ENCODE measurements at regions of chr16 and their contacts with region 1.

Region 1: DNA sequence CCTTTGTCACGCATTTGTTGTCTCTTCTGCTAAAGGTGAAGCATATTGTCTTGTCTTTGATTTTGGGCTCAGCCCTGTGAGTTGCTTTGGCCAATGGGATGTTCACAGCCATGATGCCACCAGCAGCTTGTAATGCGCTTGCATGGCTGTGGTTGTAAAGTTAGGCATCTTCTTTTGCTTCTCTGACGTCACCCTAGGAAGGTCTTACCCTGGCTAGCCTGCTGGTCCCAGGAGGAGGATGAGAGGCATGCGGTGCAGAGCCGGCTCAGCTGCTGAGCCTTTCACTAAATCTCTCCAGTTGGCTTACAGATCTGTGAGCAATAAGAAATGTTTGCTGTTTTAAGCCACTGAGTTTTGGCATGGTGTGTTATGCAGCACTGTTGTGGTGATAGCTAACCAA is 40.8 kb downstream of the IRX6 start:
- DNase-seq: no peak
- ATAC-seq: no peak
- H3K4me3 ChIP-seq: no peak overlapping the region
- H3K27ac ChIP-seq: no peak overlapping the region
- H3K4me1 ChIP-seq: peaks cover 0 to 28% (median 19%) of the 10 kb centered on the region in 12 donors
- H3K27me3 ChIP-seq: peaks cover 0 to 12% (median 0%) of the 10 kb centered on the region in 9 donors
- CTCF ChIP-seq: no peak
- POLR2A ChIP-seq: no peak

Region 2: GRCh38 chr16:55126456-55126855 is 238.4 kb before region 1 on chr16:
- intact Hi-C with region 1: loop called in 1 of 10 experiments (anchors 5 kb)
- DNase-seq: no peak
- ATAC-seq: no peak
- H3K4me3 ChIP-seq: no peak overlapping the region
- H3K27ac ChIP-seq: no peak overlapping the region
- H3K4me1 ChIP-seq: no peaks in the 10 kb centered on the region
- H3K27me3 ChIP-seq: peaks cover 0 to 4% (median 0%) of the 10 kb centered on the region in 9 donors
- CTCF ChIP-seq: no peak
- POLR2A ChIP-seq: no peak